Right ventricle myocardium inferior (tissue), 1 donor: ENCODE measurements at regions of chr18 and their contacts with region 1.

Region 1: GRCh38 chr18:7221424-7222155 is 9.3 kb upstream of the LRRC30 start:
- DNase-seq: no peak
- ATAC-seq: peak; percentile 72

Region 2: DNA sequence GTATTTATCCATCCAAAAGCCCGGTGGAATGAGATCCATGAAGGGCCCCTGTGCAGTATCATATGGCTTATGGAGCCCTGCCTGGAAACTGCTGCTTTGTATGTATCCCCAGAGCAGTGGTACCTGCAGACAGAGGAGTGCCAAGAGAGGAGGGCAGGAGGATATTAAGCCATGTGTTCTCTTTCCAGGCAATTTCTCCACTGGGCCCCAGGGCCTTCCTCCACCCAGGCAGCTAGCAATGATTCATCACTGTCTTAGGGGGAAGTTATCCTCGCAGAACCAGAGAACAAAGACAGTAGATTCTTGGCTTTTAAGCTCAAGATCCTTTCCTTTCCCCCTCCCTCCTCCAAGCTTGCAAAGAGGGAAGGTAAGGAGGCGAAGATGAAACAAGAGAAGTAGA is 107.4 kb after region 1 on chr18:
- intact Hi-C with region 1: no loop called
- DNase-seq: no peak
- ATAC-seq: no peak

Region 3: DNA sequence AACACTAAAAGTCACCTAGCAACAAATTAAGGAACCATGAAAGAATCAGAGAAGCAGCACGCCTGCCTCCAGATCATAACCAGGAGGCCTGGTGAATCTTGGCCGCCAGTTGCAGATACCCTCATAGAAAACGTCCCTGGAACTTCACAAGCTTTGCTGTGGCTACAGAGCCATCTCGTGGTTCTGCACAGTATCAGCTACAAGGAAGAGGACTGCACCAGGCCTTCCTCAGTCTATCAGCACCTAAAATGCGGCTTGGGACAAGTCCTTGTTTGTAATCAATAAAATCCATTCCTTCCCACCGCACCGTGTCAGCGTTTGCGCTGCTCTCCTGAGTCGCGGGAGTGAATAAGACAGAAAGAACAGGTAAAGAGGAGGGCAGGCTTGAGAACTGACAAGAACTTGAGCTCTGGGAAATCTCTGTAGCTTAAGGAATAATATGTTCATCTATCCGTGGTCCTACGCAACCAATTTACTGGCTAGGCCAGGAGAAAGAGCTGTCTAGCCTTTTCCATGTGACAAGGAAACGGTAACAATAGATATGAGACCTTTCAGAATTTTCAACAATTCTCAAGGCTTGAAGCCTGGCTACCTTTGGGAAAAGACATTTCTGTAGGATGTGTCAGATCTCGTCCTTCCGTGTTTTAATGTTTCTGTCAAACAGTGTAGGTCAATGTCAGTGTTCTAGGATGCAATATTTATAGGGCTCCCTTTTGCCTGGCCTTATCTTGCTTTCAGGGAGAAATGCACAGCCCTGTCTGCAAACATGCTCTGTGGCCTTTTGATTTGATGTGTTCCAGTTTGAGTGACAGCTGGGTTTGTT is 1259.1 kb after region 1 on chr18:
- intact Hi-C with region 1: loop called (anchors 5 kb)
- DNase-seq: no peak
- ATAC-seq: peak; percentile 74